ENCODE measurements at regions of chr11 and their contacts with region 1.

Region 1: DNA sequence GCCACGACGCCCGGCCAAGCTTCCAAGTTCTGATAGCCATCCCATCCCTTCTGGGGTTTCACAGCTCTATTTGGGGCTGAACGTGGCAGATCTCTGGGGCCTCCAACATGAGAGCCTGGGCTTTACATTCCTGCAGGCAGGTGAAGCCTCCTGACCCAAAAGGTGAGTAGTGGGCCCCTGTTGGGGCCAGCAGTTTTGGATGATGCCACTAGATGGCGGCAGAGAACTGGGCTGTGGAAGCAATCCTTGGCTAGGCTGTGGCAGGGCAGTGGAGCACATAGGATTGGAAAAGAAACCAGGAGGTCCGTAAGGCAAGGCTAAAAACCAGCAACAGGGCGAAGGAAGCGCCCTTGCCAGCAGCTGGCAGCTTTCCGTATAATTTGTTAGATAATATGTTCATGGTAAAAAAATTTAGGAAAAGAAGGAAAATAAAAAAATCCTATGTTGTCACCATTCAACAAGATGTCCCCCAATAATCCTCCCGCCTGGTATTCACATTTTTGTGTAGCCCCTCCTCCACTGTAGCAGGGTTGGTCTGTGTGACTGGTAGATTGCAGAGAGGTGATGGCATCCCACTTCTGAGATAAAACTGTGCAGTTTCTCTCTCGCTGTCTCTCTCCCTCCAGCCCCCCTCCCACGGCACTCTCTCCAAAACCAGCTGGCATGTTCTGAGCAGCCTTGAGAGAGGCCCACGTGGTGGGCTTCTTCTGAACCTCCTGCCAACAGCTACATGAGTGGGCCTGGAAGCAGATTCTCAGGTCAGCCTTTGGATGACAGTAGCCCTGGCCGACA is 43.6 kb upstream of the OR4B1 start:
- DNase-seq: peak; percentile 55 to 58
- H3K4me3 ChIP-seq: no peak overlapping the region
- H3K27ac ChIP-seq: no peak overlapping the region
- H3K4me1 ChIP-seq: no peaks in the 10 kb centered on the region
- H3K27me3 ChIP-seq: no peaks in the 10 kb centered on the region
- CTCF ChIP-seq: peak; percentile 98

Region 2: GRCh38 chr11:47932544-47932943 is 240.5 kb before region 1 on chr11:
- CTCF ChIA-PET with region 1: no interaction called
- POLR2A ChIA-PET with region 1: no interaction called
- intact Hi-C with region 1: loop called (anchors 10 kb)
- DNase-seq: no peak
- H3K4me3 ChIP-seq: no peak overlapping the region
- H3K27ac ChIP-seq: no peak overlapping the region
- H3K4me1 ChIP-seq: peaks cover 22% of the 10 kb centered on the region
- H3K27me3 ChIP-seq: no peaks in the 10 kb centered on the region
- CTCF ChIP-seq: no peak

Region 3: DNA sequence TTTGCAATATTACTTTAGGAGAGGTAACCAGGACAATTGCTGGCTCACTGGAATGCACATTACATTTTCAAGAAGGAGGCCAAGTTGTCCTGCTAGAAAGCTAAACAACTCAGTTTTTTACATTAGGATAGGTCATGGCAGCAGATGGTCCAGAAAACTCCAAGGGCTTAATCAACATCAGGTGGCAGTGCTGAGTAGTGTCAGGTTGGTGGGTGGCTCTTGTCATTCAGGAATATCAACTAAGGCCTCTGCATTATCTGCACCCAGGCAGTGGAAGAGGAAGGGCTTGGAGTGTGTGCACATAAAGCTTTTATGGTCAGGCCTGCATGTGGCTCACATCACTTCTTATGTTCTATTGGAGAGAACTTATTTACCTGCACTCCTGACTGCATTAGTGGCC is 11.4 kb after region 1 on chr11:
- CTCF ChIA-PET with region 1: interaction called, 15 read pairs
- POLR2A ChIA-PET with region 1: no interaction called
- intact Hi-C with region 1: no loop called
- DNase-seq: no peak
- H3K4me3 ChIP-seq: no peak overlapping the region
- H3K27ac ChIP-seq: no peak overlapping the region
- H3K4me1 ChIP-seq: no peaks in the 10 kb centered on the region
- H3K27me3 ChIP-seq: no peaks in the 10 kb centered on the region
- CTCF ChIP-seq: no peak

Region 4: DNA sequence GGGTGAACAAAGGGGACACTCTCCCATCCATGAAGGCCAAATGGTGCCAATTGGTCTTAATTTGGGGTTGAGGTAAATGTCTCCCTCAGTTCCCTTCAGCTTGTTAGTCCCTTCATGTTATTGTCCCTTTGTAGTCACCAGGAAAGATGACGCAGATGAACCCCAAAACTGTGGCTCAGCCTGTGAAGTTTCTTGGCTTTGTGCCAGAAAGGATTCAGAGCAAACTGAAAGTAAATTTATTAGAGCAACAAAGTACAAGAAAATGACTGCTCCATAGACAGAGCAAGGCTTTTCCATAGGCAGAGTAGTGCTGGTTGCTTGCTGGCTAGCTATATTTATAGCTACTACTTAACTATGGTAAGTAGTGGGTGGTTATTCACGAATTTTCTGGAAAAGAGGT is 168.5 kb after region 1 on chr11:
- CTCF ChIA-PET with region 1: no interaction called
- POLR2A ChIA-PET with region 1: no interaction called
- intact Hi-C with region 1: no loop called
- DNase-seq: no peak
- H3K4me3 ChIP-seq: no peak overlapping the region
- H3K27ac ChIP-seq: no peak overlapping the region
- H3K4me1 ChIP-seq: no peaks in the 10 kb centered on the region
- H3K27me3 ChIP-seq: no peaks in the 10 kb centered on the region
- CTCF ChIP-seq: no peak

Region 5: DNA sequence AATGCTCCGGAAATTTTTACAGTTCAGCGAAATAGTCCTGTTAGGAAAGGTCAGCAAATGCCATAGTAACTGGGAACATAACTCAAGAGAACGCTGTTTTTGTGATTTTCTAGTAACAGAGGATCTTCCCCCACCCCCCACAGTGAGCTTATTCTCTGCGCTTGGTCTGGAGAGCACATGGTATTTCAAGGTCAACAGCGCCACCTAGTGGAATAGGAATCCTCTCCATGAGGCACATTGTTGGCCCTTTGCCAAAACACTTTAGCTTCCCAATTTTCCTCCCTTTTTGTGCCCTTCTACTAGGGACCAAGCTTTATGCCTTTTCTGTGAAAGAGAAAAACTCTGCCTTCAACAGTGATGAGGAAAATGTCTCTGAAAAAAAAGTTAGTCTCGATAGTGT is 1822.6 kb after region 1 on chr11:
- CTCF ChIA-PET with region 1: interaction called, 11 read pairs
- POLR2A ChIA-PET with region 1: no interaction called
- intact Hi-C with region 1: loop called (anchors 2 kb)
- DNase-seq: peak; percentile 43 to 58
- H3K4me3 ChIP-seq: no peak overlapping the region
- H3K27ac ChIP-seq: no peak overlapping the region
- H3K4me1 ChIP-seq: no peaks in the 10 kb centered on the region
- H3K27me3 ChIP-seq: no peaks in the 10 kb centered on the region
- CTCF ChIP-seq: peak; percentile 92